Activated B cell treated with CpG ODN at 0.5 μM for 24 hours (primary cell): ENCODE measurements at regions of chr20 and their contacts with region 1.

Region 1: DNA sequence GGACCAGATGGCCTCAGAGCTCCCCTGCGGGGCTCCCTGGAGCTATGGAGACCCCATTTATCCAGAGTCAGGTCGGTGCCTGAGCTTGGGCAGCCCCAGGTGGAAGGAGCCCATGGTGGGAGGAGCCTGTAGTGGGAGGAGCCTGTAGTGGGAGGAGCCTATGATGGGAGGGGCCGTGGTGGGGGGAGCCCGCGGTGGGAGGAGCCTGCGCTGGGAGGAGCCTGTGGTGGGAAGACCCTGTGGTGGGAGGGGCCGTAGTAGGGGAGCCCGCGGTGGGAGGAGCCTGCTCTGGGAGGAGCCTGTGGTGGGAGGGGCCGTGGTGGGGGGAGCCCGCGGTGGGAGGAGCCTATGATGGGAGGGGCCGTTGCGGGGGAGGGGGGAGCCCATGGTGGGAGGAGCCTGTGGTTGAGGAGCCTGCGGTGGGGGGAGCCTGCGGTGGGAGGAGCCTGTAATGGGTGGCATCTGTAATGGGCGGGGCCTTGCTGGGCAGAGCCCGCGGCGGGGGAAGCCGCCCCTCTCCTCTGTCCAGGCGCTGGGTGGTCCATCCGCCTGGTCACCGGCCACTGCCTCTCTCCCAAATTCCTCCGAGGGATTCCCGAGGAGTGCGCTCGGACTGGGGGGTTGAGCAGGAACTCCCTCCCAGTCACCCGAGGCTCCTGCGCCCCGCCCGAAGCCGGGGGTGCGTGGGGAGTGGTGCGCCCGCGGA is 579 bp upstream of the FNDC11 start:
- DNase-seq: peak; percentile 86
- ATAC-seq: peak; percentile 78
- H3K4me3 Mint-ChIP-seq: peak overlapping the region; percentile 84
- H3K27ac Mint-ChIP-seq: peak overlapping the region; percentile 82
- H3K4me1 Mint-ChIP-seq: peaks cover 50% of the 10 kb centered on the region
- H3K27me3 Mint-ChIP-seq: no peaks in the 10 kb centered on the region
- CTCF ChIP-seq: no peak

Region 2: GRCh38 chr20:63025534-63026331 is 527.6 kb before region 1 on chr20:
- CTCF ChIA-PET with region 1: no interaction called
- POLR2A ChIA-PET with region 1: no interaction called
- intact Hi-C with region 1: no loop called
- DNase-seq: no peak
- ATAC-seq: no peak
- H3K4me3 Mint-ChIP-seq: no peak overlapping the region
- H3K27ac Mint-ChIP-seq: no peak overlapping the region
- H3K4me1 Mint-ChIP-seq: no peaks in the 10 kb centered on the region
- H3K27me3 Mint-ChIP-seq: peaks cover 44% of the 10 kb centered on the region
- CTCF ChIP-seq: no peak

Region 3: DNA sequence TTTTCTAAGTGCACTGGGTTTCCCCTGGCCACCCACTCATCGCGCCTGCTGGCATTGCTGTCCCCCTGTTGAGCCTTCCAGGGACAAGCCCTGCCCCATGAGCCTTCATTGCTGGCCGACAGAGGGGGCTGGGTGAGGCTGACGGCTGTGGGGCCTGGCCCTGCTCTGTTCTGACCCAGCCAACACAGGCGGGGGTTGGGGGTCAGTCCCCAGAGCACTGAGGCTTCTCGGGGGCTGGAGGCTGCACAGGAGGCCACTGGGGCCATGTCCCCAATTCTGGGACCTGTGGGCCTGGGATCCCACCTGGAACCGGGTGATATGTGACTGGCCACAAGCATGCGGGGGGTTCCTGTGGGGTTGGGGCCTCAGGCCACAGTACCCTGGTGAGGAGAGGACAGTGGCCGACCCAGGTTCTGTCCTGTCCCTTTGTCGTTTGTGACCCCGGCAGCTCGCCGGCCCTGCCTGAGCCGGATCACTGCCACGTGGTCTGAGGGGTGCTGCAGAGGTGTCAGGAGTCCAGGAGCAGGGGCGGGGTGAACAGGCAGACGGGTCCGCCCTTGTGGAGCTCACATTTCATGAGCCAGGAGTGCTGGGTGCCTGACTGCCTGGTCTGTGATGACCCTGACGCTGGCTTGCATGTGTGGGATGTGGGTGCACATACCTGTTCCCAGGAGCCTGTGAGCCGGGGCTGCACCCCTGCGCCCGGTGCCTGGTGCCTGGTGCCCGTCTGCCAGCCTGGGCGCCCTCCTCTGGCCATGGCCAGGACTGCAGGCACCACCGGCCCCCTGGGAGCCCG is 262.5 kb before region 1 on chr20:
- CTCF ChIA-PET with region 1: no interaction called
- POLR2A ChIA-PET with region 1: no interaction called
- intact Hi-C with region 1: no loop called
- DNase-seq: peak; percentile 65
- ATAC-seq: peak; percentile 83
- H3K4me3 Mint-ChIP-seq: no peak overlapping the region
- H3K27ac Mint-ChIP-seq: no peak overlapping the region
- H3K4me1 Mint-ChIP-seq: no peaks in the 10 kb centered on the region
- H3K27me3 Mint-ChIP-seq: peaks cover 9% of the 10 kb centered on the region
- CTCF ChIP-seq: no peak

Region 4: GRCh38 chr20:63342561-63343459 is 210.6 kb before region 1 on chr20:
- CTCF ChIA-PET with region 1: no interaction called
- POLR2A ChIA-PET with region 1: no interaction called
- intact Hi-C with region 1: no loop called
- DNase-seq: no peak
- ATAC-seq: no peak
- H3K4me3 Mint-ChIP-seq: no peak overlapping the region
- H3K27ac Mint-ChIP-seq: no peak overlapping the region
- H3K4me1 Mint-ChIP-seq: no peaks in the 10 kb centered on the region
- H3K27me3 Mint-ChIP-seq: peaks cover 5% of the 10 kb centered on the region
- CTCF ChIP-seq: no peak

Region 5: GRCh38 chr20:63442100-63442493 is 111.3 kb before region 1 on chr20:
- CTCF ChIA-PET with region 1: no interaction called
- POLR2A ChIA-PET with region 1: no interaction called
- intact Hi-C with region 1: no loop called
- DNase-seq: peak; percentile 25
- ATAC-seq: peak; percentile 69
- H3K4me3 Mint-ChIP-seq: no peak overlapping the region
- H3K27ac Mint-ChIP-seq: no peak overlapping the region
- H3K4me1 Mint-ChIP-seq: peaks cover 17% of the 10 kb centered on the region
- H3K27me3 Mint-ChIP-seq: peaks cover 12% of the 10 kb centered on the region
- CTCF ChIP-seq: no peak

Region 6: DNA sequence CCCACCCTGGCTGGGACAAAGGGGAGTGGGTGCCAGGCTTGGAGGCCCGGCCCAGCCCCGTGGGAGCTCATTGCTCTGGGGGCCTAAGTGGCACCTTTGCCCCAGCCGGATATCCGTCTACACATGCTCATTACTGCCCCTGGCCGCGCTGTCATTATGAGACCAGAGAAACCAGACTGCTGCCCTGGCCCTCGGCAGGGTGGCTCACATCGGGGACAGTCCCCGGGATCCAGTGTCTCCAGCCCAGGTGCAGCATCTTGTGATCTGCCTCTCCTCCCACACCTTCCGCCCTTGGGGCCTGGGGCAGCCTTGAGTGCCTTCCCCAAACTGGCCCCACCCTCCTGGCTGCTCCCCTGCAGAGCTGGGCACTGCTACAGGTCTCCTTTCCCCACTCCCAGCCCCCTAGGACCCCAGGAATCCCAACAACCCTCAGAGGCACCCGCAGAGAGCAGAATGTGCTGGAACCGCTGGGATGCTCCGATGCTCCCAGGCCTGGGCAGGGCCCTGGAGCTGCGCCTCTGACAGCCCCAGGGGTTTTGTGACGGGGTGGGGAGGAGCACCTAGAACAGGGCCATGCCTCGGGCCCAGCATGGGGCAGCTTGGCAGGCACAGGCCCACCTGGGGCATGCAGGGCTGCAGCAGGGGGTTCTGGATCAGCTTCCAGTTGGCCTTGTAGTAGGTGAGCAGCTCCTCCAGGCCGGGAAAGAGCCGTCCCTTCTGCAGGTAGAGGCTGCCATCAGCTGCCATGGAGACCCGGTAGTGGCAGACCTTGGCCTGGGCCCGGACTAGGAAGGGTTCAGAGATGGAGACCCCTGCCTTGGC is 10.5 kb before region 1 on chr20:
- CTCF ChIA-PET with region 1: interaction called, 17 read pairs
- POLR2A ChIA-PET with region 1: interaction called, 42 read pairs
- intact Hi-C with region 1: loop called (anchors 1 kb)
- DNase-seq: peak; percentile 51
- ATAC-seq: peak; percentile 37
- H3K4me3 Mint-ChIP-seq: peak overlapping the region; percentile 53
- H3K27ac Mint-ChIP-seq: peak overlapping the region; percentile 72
- H3K4me1 Mint-ChIP-seq: peaks cover 49% of the 10 kb centered on the region
- H3K27me3 Mint-ChIP-seq: no peaks in the 10 kb centered on the region
- CTCF ChIP-seq: no peak

Region 7: DNA sequence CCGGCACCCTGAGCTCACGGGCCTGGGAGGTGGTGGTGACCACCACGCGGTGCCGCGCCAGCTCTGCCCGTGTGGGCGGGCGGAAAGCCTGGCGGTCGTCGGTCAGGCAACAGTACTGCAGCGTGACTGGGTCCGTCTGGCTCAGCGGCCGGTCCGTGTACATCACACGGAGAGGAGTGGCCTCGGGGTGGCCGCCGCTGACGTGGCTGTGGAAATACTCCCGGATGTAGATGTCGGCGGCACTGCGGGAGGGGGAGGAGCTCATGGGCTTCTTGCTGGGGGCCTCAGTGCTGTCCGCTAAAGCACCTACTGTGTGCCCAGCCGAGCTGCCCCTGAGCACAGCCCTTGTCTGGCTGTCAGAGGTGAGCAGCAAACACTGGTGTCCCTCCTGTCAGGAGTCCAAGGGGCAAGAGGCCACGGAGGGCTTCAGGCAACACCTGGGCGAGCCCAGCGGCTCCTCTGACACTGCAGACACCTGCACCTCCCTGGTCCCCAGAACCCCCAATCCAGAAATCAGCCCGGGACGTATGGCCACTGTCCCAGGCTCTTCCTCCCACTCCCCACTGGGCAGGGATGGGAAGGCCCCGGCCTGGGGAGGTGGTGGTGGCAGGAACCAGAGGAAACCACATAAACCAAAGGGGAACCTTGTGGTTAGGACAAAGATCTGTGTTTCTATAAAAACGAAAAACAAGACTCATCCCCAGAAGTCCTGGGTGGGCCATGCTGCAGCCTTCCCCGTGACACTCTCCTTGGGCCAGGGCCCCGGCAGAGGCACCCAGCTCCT is 14.2 kb after region 1 on chr20:
- CTCF ChIA-PET with region 1: interaction called, 3 read pairs
- POLR2A ChIA-PET with region 1: interaction called, 18 read pairs
- intact Hi-C with region 1: loop called (anchors 1 kb)
- DNase-seq: peak; percentile 62
- ATAC-seq: peak; percentile 76
- H3K4me3 Mint-ChIP-seq: peak overlapping the region; percentile 68
- H3K27ac Mint-ChIP-seq: peak overlapping the region; percentile 75
- H3K4me1 Mint-ChIP-seq: peaks cover 31% of the 10 kb centered on the region
- H3K27me3 Mint-ChIP-seq: no peaks in the 10 kb centered on the region
- CTCF ChIP-seq: no peak

Region 8: DNA sequence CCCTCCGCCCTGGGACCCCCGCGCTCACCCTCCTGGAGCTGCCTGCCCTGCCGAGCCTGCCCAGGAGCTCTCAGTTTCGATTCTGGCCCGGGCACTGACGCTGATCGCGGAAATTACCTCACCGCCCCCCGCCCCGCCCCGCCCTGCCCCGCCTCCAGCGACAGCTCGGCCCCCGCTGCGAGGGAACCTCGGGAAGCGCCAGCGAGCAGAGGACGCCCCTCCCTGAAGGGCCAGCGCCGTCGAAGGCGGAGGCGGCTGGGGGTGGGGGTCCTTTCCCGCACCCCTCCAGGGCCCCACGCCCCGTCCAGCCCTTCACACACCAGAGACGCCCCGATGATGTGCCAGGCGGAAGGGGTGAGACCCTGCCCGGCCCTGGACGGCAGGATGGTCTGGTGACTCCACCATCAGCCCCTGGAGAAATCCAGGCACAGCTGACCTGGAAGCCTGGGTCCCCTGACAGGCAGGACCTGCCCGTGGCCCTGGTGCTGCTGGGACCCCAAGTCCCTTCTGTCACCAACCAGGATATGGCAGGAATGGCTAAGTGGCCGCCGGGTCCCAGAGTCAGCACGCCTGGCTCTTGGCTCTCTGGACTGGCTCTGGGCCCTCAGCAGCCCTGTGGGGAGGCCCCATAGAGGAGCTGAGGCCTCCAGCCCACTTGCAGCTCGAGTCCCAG is 20.9 kb after region 1 on chr20 and contains the start of gene HELZ2:
- CTCF ChIA-PET with region 1: no interaction called
- POLR2A ChIA-PET with region 1: interaction called, 14 read pairs
- intact Hi-C with region 1: loop called (anchors 1 kb)
- DNase-seq: peak; percentile 55
- ATAC-seq: peak; percentile 95
- H3K4me3 Mint-ChIP-seq: peak within 1 kb of the TSS; percentile 83
- H3K27ac Mint-ChIP-seq: peak within 1 kb of the TSS; percentile 70
- H3K4me1 Mint-ChIP-seq: peaks cover 12% of the 10 kb centered on the region
- H3K27me3 Mint-ChIP-seq: peaks cover 2% of the 10 kb centered on the region
- CTCF ChIP-seq: no peak
- total RNA-seq, gene HELZ2: 25.4 and 28.9 TPM in 2 replicates

Region 9: GRCh38 chr20:63627129-63627750 is 73.9 kb after region 1 on chr20:
- CTCF ChIA-PET with region 1: no interaction called
- POLR2A ChIA-PET with region 1: interaction called, 5 read pairs
- intact Hi-C with region 1: loop called (anchors 2 kb)
- DNase-seq: peak; percentile 97
- ATAC-seq: peak; percentile 77
- H3K4me3 Mint-ChIP-seq: peak overlapping the region; percentile 91
- H3K27ac Mint-ChIP-seq: peak overlapping the region; percentile 93
- H3K4me1 Mint-ChIP-seq: peaks cover 45% of the 10 kb centered on the region
- H3K27me3 Mint-ChIP-seq: no peaks in the 10 kb centered on the region
- CTCF ChIP-seq: no peak

Region 10: DNA sequence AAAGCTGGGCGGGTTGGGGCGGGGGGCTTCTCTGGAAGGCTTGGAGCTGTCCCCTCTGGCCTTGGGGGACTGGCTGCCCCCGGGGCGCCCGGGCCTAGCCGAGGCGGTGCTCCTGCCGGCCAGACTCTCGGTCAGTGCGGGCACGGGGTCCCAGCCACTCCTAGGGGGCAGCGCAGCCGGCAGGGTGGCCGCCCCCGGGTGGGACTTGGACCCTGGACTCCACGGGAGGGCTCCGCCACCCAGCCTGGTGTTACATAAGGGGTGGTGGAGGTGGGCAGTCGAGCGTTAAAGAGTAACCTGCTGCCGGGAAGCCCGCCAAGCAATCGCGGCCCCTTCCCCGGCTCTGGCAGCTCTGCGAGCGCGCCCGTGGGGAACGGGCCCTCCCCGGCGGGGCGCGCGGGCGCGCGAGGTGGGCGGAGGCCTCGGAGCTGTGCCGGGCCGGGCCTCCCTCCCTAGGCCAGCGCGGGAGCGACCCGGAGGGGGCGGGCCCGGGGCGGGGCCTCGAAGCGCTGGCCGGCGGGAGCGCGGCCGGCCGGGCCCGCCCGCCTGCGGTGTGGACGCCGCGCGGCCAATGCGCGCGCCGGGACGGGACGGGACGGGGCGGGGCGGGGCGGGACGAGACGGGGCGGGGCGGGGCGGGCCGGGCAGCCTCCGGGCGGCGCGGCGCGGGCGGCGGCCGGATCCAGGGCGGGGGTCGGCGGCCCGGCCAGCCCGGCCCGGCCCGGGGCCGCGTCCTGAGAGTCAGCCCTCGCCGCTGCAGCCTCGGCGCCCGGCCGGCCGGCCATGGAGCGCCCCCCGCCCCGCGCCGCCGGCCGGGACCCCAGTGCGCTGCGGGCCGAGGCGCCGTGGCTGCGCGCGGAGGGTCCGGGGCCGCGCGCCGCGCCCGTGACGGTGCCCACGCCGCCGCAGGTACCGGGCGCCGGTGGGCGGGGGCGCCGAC is 186.0 kb after region 1 on chr20 and contains the start of gene SLC2A4RG:
- CTCF ChIA-PET with region 1: no interaction called
- POLR2A ChIA-PET with region 1: no interaction called
- intact Hi-C with region 1: loop called (anchors 5 kb)
- DNase-seq: peak; percentile 73
- ATAC-seq: peak; percentile 65
- H3K4me3 Mint-ChIP-seq: peak within 1 kb of the TSS; percentile 48
- H3K27ac Mint-ChIP-seq: no peak within 1 kb of the TSS
- H3K4me1 Mint-ChIP-seq: peaks cover 28% of the 10 kb centered on the region
- H3K27me3 Mint-ChIP-seq: no peaks in the 10 kb centered on the region
- CTCF ChIP-seq: no peak
- total RNA-seq, gene SLC2A4RG: 20.9 and 28.1 TPM in 2 replicates

Region 11: GRCh38 chr20:63955827-63956663 is 402.7 kb after region 1 on chr20 and contains the start of gene UCKL1:
- CTCF ChIA-PET with region 1: no interaction called
- POLR2A ChIA-PET with region 1: interaction called, 7 read pairs
- intact Hi-C with region 1: loop called (anchors 5 kb)
- DNase-seq: peak; percentile 87
- ATAC-seq: peak; percentile 78
- H3K4me3 Mint-ChIP-seq: peak within 1 kb of the TSS; percentile 87
- H3K27ac Mint-ChIP-seq: peak within 1 kb of the TSS; percentile 85
- H3K4me1 Mint-ChIP-seq: peaks cover 49% of the 10 kb centered on the region
- H3K27me3 Mint-ChIP-seq: no peaks in the 10 kb centered on the region
- CTCF ChIP-seq: no peak
- total RNA-seq, gene UCKL1: 43.6 and 49.7 TPM in 2 replicates